CD8-positive, alpha-beta T cell (primary cell): ENCODE measurements at regions of chr19 and their contacts with region 1.

Region 1: DNA sequence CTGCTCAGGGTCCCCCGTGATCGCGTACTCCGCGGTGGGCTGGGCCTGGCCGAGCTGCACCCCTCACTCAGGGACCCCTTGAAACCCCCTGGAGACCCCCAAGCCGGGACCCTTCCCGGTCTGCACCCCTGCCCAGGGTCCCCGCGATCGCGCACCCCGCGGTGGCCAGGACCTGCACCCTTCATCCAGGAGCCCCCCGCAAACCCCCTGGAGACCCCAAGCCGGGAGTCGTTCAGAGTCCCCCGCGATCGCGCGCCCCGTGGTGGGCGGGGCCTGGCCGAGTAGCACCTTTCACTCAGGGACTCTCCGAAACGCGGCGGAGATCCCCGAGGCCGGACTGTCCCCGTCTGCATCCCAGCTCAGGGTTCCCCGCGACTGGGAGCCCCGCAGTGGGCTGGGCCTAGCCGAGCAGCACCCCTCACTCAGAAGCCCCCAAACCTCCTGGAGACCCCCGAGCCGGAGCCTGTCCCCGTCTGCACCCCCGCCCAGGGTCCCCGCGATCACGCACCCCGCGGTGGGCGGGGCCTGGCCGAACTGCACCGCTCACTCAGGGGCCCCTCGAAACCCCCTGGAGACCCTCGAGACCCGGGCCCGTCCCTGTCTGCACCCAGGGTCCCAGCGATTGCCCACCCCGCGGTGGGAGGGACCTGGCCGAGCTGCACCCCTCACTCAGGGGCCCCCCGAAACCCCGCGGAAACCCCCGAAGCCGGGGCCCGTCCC is 748 bp downstream of the LMNB2 start:
- DNase-seq: peak in 7 of 9 experiments; percentile 22 to 87 (median 52)
- ATAC-seq: peak; percentile 41
- H3K4me3 ChIP-seq: peak overlapping the region; percentile 62 to 80
- H3K4me3 Mint-ChIP-seq: peak overlapping the region; percentile 83
- H3K27ac ChIP-seq: peak overlapping the region; percentile 32 to 50
- H3K27ac Mint-ChIP-seq: peak overlapping the region; percentile 75
- H3K4me1 ChIP-seq: peaks cover 14% of the 10 kb centered on the region
- H3K4me1 Mint-ChIP-seq: peaks cover 13% of the 10 kb centered on the region
- H3K27me3 ChIP-seq: no peaks in the 10 kb centered on the region
- H3K27me3 Mint-ChIP-seq: no peaks in the 10 kb centered on the region
- CTCF ChIP-seq: no peak

Region 2: GRCh38 chr19:2273356-2274184 is 182.4 kb before region 1 on chr19:
- CTCF ChIA-PET with region 1: no interaction called
- POLR2A ChIA-PET with region 1: no interaction called
- intact Hi-C with region 1: no loop called
- DNase-seq: peak; percentile 52 to 90 (median 80)
- ATAC-seq: peak; percentile 17
- H3K4me3 ChIP-seq: peak overlapping the region; percentile 35 to 43
- H3K4me3 Mint-ChIP-seq: peak overlapping the region; percentile 68
- H3K27ac ChIP-seq: peak overlapping the region; percentile 58 to 76
- H3K27ac Mint-ChIP-seq: peak overlapping the region; percentile 78
- H3K4me1 ChIP-seq: peaks cover 35% of the 10 kb centered on the region
- H3K4me1 Mint-ChIP-seq: peaks cover 32% of the 10 kb centered on the region
- H3K27me3 ChIP-seq: no peaks in the 10 kb centered on the region
- H3K27me3 Mint-ChIP-seq: no peaks in the 10 kb centered on the region
- CTCF ChIP-seq: peak; percentile 97

Region 3: DNA sequence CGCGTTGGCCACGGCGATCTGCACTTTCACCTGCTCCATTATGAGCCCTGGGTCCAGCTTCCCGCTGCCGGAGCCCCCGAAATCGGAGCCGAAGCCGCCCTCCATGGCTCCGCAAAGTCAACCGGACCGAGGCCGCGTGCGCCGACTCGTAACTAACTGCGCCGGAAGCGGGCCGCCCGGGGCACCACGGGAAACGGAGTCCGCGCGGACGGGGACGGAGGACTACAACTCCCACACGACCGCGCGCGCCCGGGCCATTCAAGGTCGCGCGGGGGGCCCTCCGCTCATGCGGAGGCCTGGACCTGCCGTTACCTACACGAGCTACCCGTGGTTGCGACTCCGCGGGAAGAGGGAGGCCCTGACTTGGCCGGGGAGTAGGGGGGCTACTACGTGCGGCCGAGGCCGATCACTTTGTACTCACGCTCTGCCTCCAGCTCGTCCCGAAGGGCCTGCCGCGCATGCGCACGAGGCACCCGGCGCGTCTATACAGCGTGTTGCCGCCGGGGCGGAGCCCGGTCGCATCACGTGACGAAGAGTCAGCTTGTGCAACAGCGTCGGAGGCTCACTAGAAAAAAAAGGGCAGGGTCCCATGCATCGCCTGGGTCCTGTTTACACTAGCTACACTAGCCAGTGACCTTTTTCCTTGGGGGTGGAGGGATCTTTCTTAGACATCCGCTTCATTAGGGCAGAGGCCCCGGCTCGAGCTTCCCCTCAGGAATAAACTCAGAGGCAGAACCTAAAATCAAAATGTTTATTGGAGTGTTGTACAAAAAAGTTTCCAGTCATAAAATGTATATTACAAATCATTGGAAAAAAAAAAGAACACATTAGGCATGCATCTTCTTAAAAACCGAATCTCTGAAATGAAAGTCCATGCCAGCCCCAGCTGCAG is 28.3 kb before region 1 on chr19 and contains the start of gene TIMM13:
- CTCF ChIA-PET with region 1: no interaction called
- POLR2A ChIA-PET with region 1: interaction called, 21 read pairs
- intact Hi-C with region 1: loop called (anchors 1 kb)
- DNase-seq: peak; percentile 91 to 98 (median 96)
- ATAC-seq: peak; percentile 94
- H3K4me3 ChIP-seq: peak within 1 kb of the TSS; percentile 92 to 98
- H3K4me3 Mint-ChIP-seq: peak within 1 kb of the TSS; percentile 95
- H3K27ac ChIP-seq: peak within 1 kb of the TSS; percentile 96 to 99
- H3K27ac Mint-ChIP-seq: peak within 1 kb of the TSS; percentile 98
- H3K4me1 ChIP-seq: peaks cover 19% of the 10 kb centered on the region
- H3K4me1 Mint-ChIP-seq: peaks cover 13% of the 10 kb centered on the region
- H3K27me3 ChIP-seq: no peaks in the 10 kb centered on the region
- H3K27me3 Mint-ChIP-seq: no peaks in the 10 kb centered on the region
- CTCF ChIP-seq: no peak
- total RNA-seq, gene TIMM13: 21.5 to 24.4 TPM

Region 4: GRCh38 chr19:2702162-2703076 is 246.4 kb after region 1 on chr19 and contains the start of gene GNG7:
- CTCF ChIA-PET with region 1: no interaction called
- POLR2A ChIA-PET with region 1: no interaction called
- intact Hi-C with region 1: loop called in 1 of 2 experiments (anchors 5 kb)
- DNase-seq: peak; percentile 89 to 97 (median 94)
- ATAC-seq: peak; percentile 100
- H3K4me3 ChIP-seq: peak within 1 kb of the TSS; percentile 38 to 50
- H3K4me3 Mint-ChIP-seq: peak within 1 kb of the TSS; percentile 79
- H3K27ac ChIP-seq: no peak within 1 kb of the TSS
- H3K27ac Mint-ChIP-seq: no peak within 1 kb of the TSS
- H3K4me1 ChIP-seq: peaks cover 26% of the 10 kb centered on the region
- H3K4me1 Mint-ChIP-seq: peaks cover 33% of the 10 kb centered on the region
- H3K27me3 ChIP-seq: no peaks in the 10 kb centered on the region
- H3K27me3 Mint-ChIP-seq: no peaks in the 10 kb centered on the region
- CTCF ChIP-seq: no peak
- total RNA-seq, gene GNG7: 2.6 to 2.9 TPM